ENCODE measurements at regions of chr19 and their contacts with region 1.

Region 1: GRCh38 chr19:18803550-18804138 is 12.5 kb upstream of the COMP start:
- DNase-seq: no peak
- ATAC-seq: no peak
- H3K4me3 ChIP-seq: no peak overlapping the region
- H3K4me3 Mint-ChIP-seq: no peak overlapping the region
- H3K27ac ChIP-seq: no peak overlapping the region
- H3K27ac Mint-ChIP-seq: no peak overlapping the region
- H3K4me1 ChIP-seq: no peaks in the 10 kb centered on the region
- H3K4me1 Mint-ChIP-seq: no peaks in the 10 kb centered on the region
- H3K27me3 ChIP-seq: peaks cover 0 to 51% of the 10 kb centered on the region in 2 experiments
- H3K27me3 Mint-ChIP-seq: peaks cover 10 to 13% of the 10 kb centered on the region in 2 donors

Region 2: GRCh38 chr19:18672044-18672451 is 131.6 kb before region 1 on chr19:
- CTCF ChIA-PET with region 1: interaction called in 1 of 2 experiments, 10 read pairs
- POLR2A ChIA-PET with region 1: no interaction called
- DNase-seq: no peak
- ATAC-seq: no peak
- H3K4me3 ChIP-seq: no peak overlapping the region
- H3K4me3 Mint-ChIP-seq: no peak overlapping the region
- H3K27ac ChIP-seq: no peak overlapping the region
- H3K27ac Mint-ChIP-seq: no peak overlapping the region
- H3K4me1 ChIP-seq: no peaks in the 10 kb centered on the region
- H3K4me1 Mint-ChIP-seq: no peaks in the 10 kb centered on the region
- H3K27me3 ChIP-seq: peaks cover 0 to 2% of the 10 kb centered on the region in 2 experiments
- H3K27me3 Mint-ChIP-seq: no peaks in the 10 kb centered on the region

Measured in T-cell (primary cell).